Psoas muscle (tissue), 8 donors: ENCODE measurements at regions of chr5 and their contacts with region 1.

Region 1: DNA sequence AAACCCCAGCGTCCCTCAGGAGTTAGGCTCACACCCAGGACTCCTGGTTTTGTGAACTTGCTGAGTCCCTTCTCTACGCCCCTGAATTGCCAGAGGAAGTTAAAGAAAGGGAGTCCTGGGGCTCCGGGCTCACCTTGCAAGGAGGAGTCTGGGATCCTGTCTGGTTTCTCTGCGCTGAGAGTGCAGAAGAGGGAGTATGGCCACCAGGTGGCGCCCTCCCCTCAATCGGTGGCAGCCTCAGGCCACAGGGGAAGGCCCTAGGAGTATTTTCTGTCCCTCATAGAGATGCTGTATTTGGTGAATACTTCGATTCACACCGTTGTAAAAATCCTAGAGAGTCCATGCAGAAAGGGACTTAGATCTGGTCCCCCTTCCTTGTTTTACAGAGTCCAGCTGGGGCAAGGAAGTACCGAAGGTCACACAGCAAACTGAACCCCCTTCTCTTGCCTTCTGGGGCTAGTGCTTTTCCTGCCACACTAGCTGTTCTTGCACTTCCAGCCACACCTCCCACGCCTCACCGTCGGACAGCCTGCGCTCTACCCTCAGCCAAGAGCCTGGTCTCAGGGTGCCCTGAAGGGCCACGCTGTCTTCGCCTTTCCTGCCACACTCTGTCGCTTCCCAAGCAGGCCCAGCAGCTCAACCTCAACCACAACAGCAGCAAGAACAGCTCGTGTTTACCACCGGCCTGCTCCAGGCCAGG is 10.2 kb downstream of the HAND1 start:
- DNase-seq: peak; percentile 79 to 84
- ATAC-seq: peak; percentile 89 to 95 (median 90)
- H3K4me3 ChIP-seq: no peak overlapping the region
- H3K27ac ChIP-seq: no peak overlapping the region
- H3K4me1 ChIP-seq: peaks cover 1% of the 10 kb centered on the region
- H3K27me3 ChIP-seq: peaks cover 0 to 36% (median 7%) of the 10 kb centered on the region in 3 donors
- CTCF ChIP-seq: peak; percentile 92

Region 2: GRCh38 chr5:154593071-154593470 is 125.3 kb after region 1 on chr5:
- intact Hi-C with region 1: no loop called
- DNase-seq: no peak
- ATAC-seq: no peak
- H3K4me3 ChIP-seq: no peak overlapping the region
- H3K27ac ChIP-seq: no peak overlapping the region
- H3K4me1 ChIP-seq: no peaks in the 10 kb centered on the region
- H3K27me3 ChIP-seq: peaks cover 0 to 6% (median 0%) of the 10 kb centered on the region in 3 donors
- CTCF ChIP-seq: no peak

Region 3: GRCh38 chr5:154610321-154611154 is 142.7 kb after region 1 on chr5:
- intact Hi-C with region 1: loop called (anchors 2 to 5 kb)
- DNase-seq: peak; percentile 63 to 78
- ATAC-seq: peak; percentile 84 to 95 (median 92)
- H3K4me3 ChIP-seq: peak overlapping the region; percentile 50
- H3K27ac ChIP-seq: no peak overlapping the region
- H3K4me1 ChIP-seq: peaks cover 7% of the 10 kb centered on the region
- H3K27me3 ChIP-seq: peaks cover 0 to 37% (median 20%) of the 10 kb centered on the region in 3 donors
- CTCF ChIP-seq: peak; percentile 73

Region 4: GRCh38 chr5:154642499-154643245 is 174.9 kb after region 1 on chr5:
- intact Hi-C with region 1: loop called in 1 of 2 experiments (anchors 5 kb)
- DNase-seq: no peak
- ATAC-seq: peak in 3 of 4 donors; percentile 65 to 79 (median 73)
- H3K4me3 ChIP-seq: no peak overlapping the region
- H3K27ac ChIP-seq: no peak overlapping the region
- H3K4me1 ChIP-seq: peaks cover 4% of the 10 kb centered on the region
- H3K27me3 ChIP-seq: no peaks in the 10 kb centered on the region
- CTCF ChIP-seq: peak; percentile 46